ENCODE measurements at regions of chr11 and their contacts with region 1.

Region 1: GRCh38 chr11:117823294-117823945 is 1.1 kb downstream of the FXYD2 start:
- DNase-seq: no peak
- H3K4me3 Mint-ChIP-seq: no peak overlapping the region
- H3K27ac Mint-ChIP-seq: no peak overlapping the region
- H3K4me1 Mint-ChIP-seq: peaks cover 47% of the 10 kb centered on the region
- H3K27me3 Mint-ChIP-seq: no peaks in the 10 kb centered on the region
- CTCF ChIP-seq: no peak

Region 2: DNA sequence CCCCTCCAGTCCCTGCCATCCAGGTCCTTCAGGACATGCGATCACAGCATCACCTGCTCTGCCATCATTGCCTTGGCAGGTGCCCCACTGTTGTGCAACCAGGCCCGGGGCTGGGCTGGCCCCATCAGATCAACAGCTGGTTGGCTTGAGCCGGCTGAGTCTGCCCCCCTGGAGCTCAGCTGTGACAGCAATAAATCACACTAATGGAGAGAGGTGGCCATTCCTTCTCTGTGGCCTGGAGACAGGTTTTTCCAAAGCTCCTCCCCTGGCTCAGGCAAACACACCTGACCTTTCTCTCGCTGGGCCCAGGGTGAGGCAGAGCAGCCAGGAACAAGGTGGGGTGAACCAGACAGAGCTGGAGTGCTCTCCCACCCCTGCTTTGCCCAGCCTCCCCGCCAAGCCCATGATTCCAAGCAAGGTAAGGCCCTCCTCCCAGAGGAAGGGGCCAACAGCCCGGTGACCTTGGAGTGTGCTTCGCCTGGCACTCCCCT is 10.0 kb after region 1 on chr11:
- CTCF ChIA-PET with region 1: interaction called, 11 read pairs
- intact Hi-C with region 1: no loop called
- DNase-seq: peak; percentile 86
- H3K4me3 Mint-ChIP-seq: no peak overlapping the region
- H3K27ac Mint-ChIP-seq: peak overlapping the region; percentile 63
- H3K4me1 Mint-ChIP-seq: peaks cover 32% of the 10 kb centered on the region
- H3K27me3 Mint-ChIP-seq: no peaks in the 10 kb centered on the region
- CTCF ChIP-seq: no peak